ENCODE measurements at regions of chr7 and their contacts with region 1.

Region 1: DNA sequence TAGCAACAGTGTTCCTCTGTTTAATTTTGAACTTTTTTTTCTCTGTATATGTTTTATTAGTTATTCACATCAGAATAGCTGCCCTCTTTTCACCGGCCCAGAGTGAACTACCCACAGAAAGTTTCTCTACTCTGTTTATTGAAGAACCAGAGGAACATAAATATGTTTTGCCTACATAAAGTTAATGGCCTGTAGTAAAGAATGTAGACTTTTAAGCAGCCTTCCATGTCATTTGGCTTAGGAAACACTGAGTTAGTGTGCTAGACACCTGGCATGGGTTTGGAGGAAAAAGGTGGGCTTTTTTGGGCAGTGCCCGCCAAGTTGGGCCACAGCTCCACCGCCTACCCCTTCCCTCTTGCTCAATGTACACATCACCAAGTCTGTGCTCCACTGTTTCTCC is 8.9 kb upstream of the MEST start:
- DNase-seq: no peak
- H3K4me3 ChIP-seq: no peak overlapping the region
- H3K27ac ChIP-seq: no peak overlapping the region
- H3K4me1 ChIP-seq: peaks cover 4% of the 10 kb centered on the region
- H3K27me3 ChIP-seq: no peaks in the 10 kb centered on the region
- CTCF ChIP-seq: no peak
- EP300 ChIP-seq: no peak
- POLR2A ChIP-seq: no peak

Region 2: DNA sequence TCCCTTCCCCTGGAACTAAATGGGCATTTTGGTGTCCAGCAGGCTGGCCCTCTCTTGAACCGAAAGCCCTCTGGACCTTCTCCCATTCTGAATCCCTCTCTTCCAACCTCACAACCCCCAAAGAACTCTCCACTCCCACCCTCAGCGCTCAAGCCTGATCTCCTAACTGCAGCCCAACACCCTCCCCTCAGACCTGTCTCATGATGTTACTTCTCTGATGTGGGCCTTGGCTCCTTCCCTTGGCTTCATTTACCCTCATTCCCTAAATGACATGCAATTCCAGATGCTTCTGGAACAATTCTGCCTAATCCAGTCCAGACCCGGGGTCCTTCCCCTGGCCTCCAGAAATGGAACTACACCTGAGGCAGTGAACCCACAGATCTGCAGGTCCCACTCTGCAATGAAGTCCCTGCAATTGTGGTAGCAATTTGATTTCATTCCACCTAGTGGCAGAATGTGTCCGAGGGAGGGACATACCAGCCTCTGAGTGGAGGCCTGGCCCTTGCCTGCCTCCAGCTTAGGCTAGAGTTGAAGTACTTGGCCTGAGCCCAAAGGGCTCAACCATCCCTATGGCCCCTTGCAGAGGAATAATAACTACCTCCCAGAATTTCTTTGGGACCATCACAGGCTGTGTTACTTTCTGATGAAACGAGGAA is 38.2 kb before region 1 on chr7:
- intact Hi-C with region 1: loop called in 1 of 4 experiments (anchors 1 kb)
- DNase-seq: no peak
- H3K4me3 ChIP-seq: no peak overlapping the region
- H3K27ac ChIP-seq: no peak overlapping the region
- H3K4me1 ChIP-seq: peaks cover 4% of the 10 kb centered on the region
- H3K27me3 ChIP-seq: no peaks in the 10 kb centered on the region
- CTCF ChIP-seq: no peak
- EP300 ChIP-seq: no peak
- POLR2A ChIP-seq: no peak

Measured in ovary (tissue), 10 donors.